ENCODE measurements at regions of chr9 and their contacts with region 1.

Region 1: DNA sequence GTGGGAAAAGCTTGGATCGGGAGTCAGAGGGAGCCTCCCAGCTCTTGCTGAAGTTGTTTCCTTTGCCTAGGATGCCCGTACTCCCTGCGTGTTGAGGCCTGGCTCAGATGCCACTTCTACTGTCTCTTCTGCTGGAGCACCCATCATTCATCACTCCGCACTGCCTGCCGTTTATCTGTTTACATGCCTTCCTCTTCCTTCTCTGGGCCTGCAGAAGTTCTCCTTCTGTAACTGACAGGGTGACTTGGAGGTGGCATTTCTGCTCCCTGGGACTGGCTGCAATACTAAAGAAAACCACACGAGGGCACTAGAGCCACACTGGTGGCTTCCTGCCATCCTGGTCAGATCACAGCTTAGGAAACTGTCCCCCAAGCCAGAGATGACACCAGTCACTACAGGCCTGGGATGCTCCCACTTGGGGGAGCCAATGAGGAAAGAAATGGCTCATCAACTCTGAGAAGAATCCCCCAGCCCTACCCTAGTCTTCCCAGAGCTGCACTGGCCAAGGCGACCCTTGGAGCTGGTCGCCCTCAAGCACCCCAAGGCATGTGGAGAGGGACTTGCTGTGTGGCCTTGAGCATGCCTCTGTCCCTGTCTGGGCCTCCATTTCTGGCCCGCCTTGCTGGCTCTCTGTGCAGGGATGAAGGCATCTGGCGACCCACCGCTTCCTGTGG is 9.7 kb upstream of the SLC25A51 start:
- DNase-seq: peak; percentile 71 to 83
- H3K4me3 ChIP-seq: no peak overlapping the region
- H3K27ac ChIP-seq: peak overlapping the region in 1 of 2 donors; percentile 2
- H3K4me1 ChIP-seq: no peaks in the 10 kb centered on the region
- H3K27me3 ChIP-seq: no peaks in the 10 kb centered on the region
- CTCF ChIP-seq: peak; percentile 93 to 97 (median 96)
- POLR2A ChIP-seq: no peak

Region 2: GRCh38 chr9:37840560-37841194 is 72.9 kb before region 1 on chr9:
- intact Hi-C with region 1: no loop called
- DNase-seq: no peak
- H3K4me3 ChIP-seq: no peak overlapping the region
- H3K27ac ChIP-seq: no peak overlapping the region
- H3K4me1 ChIP-seq: no peaks in the 10 kb centered on the region
- H3K27me3 ChIP-seq: no peaks in the 10 kb centered on the region
- CTCF ChIP-seq: no peak
- POLR2A ChIP-seq: no peak

Region 3: GRCh38 chr9:38006163-38006562 is 92.5 kb after region 1 on chr9:
- intact Hi-C with region 1: loop called (anchors 2 kb)
- DNase-seq: no peak
- H3K4me3 ChIP-seq: no peak overlapping the region
- H3K27ac ChIP-seq: peak overlapping the region in 1 of 2 donors; percentile 40
- H3K4me1 ChIP-seq: peaks cover 8 to 12% of the 10 kb centered on the region in 2 donors
- H3K27me3 ChIP-seq: no peaks in the 10 kb centered on the region
- CTCF ChIP-seq: no peak
- POLR2A ChIP-seq: no peak

Region 4: GRCh38 chr9:38088006-38088925 is 174.6 kb after region 1 on chr9:
- intact Hi-C with region 1: loop called (anchors 10 kb)
- DNase-seq: peak; percentile 47 to 85
- H3K4me3 ChIP-seq: no peak overlapping the region
- H3K27ac ChIP-seq: no peak overlapping the region
- H3K4me1 ChIP-seq: no peaks in the 10 kb centered on the region
- H3K27me3 ChIP-seq: no peaks in the 10 kb centered on the region
- CTCF ChIP-seq: peak; percentile 92 to 93 (median 93)
- POLR2A ChIP-seq: no peak

Region 5: GRCh38 chr9:38392235-38393127 is 478.9 kb after region 1 on chr9 and contains the start of gene ALDH1B1:
- intact Hi-C with region 1: loop called (anchors 2 kb)
- DNase-seq: peak; percentile 43 to 75
- H3K4me3 ChIP-seq: peak within 1 kb of the TSS; percentile 69 to 74 (median 71)
- H3K27ac ChIP-seq: peak within 1 kb of the TSS; percentile 44 to 46
- H3K4me1 ChIP-seq: peaks cover 0 to 4% of the 10 kb centered on the region in 2 donors
- H3K27me3 ChIP-seq: no peaks in the 10 kb centered on the region
- CTCF ChIP-seq: no peak
- POLR2A ChIP-seq: no peak
- total RNA-seq, gene ALDH1B1: 10.2 to 18.4 (median 11.0) TPM